Panc1 (cell line): ENCODE measurements at regions of chr11 and their contacts with region 1.

Region 1: DNA sequence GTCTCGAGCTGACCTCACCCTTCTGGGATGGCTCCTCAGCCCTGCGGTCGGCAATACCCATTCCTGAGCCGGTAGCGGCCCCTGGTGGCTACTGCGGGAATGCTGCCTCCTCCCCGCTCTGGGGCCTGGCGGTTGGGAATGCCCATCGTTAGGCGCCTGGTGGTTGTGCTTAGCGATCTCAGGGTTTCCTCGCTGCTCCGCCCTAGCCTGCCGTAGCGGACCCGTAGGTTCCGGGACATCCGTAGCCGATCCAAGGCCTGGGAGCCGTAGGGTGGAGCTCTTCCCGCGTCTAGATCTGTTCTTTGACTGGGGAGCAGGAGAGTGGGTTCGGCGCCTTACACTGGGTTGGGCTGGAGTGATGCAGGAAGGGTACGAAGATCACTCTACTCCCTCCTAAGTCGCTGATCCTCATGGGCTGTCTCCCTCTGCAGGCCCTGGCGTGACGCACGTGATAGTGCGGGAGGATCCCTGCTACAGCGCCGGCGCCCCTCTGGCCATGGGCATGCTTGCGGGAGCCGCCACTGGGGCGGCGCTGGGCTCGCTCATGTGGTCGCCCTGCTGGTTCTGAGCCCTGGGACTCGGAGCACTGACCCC is 14.8 kb downstream of the PLEKHB1 start:
- DNase-seq: peak; percentile 65
- ATAC-seq: peak; percentile 97
- H3K4me3 ChIP-seq: peak overlapping the region; percentile 7 to 36; a peak in 2 of 4 replicates
- H3K27ac ChIP-seq: peak overlapping the region; percentile 49; the same call in 1 of the 2 replicates
- H3K4me1 ChIP-seq: no peaks in the 10 kb centered on the region
- H3K27me3 ChIP-seq: no peaks in the 10 kb centered on the region
- CTCF ChIP-seq: peak; percentile 98

Region 2: DNA sequence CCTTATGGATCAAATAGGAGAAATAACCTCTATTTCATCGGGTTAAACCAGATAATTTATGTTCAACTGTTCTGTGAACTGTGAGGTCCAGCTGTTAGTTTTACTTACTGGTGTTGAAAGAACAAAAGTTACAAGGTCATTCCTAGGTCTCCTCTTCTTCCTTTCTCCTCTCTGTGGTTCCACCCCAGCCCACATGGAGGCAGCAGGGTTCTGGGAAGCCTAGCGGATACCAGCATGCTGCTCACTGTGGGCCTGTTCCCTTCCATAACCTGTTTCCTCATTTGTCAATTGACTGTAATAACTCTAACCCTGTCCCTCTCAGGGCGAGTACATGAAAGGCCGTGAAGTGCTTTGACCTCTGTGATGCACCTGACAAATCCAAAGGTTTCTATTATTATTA is 257.1 kb before region 1 on chr11:
- CTCF ChIA-PET with region 1: interaction called, 5 read pairs
- POLR2A ChIA-PET with region 1: no interaction called
- in situ Hi-C with region 1: no loop called
- intact Hi-C with region 1: loop called (anchors 5 kb)
- DNase-seq: no peak
- ATAC-seq: peak; percentile 72
- H3K4me3 ChIP-seq: no peak overlapping the region
- H3K27ac ChIP-seq: no peak overlapping the region
- H3K4me1 ChIP-seq: no peaks in the 10 kb centered on the region
- H3K27me3 ChIP-seq: no peaks in the 10 kb centered on the region
- CTCF ChIP-seq: peak; percentile 77

Region 3: GRCh38 chr11:73478738-73479347 is 182.3 kb before region 1 on chr11:
- CTCF ChIA-PET with region 1: interaction called, 17 read pairs
- POLR2A ChIA-PET with region 1: interaction called, 3 read pairs
- in situ Hi-C with region 1: no loop called
- intact Hi-C with region 1: loop called (anchors 5 kb)
- DNase-seq: peak; percentile 27
- ATAC-seq: peak; percentile 93
- H3K4me3 ChIP-seq: no peak overlapping the region
- H3K27ac ChIP-seq: no peak overlapping the region
- H3K4me1 ChIP-seq: no peaks in the 10 kb centered on the region
- H3K27me3 ChIP-seq: no peaks in the 10 kb centered on the region
- CTCF ChIP-seq: peak; percentile 94

Region 4: GRCh38 chr11:73530109-73530508 is 131.0 kb before region 1 on chr11:
- CTCF ChIA-PET with region 1: interaction called, 13 read pairs
- POLR2A ChIA-PET with region 1: no interaction called
- in situ Hi-C with region 1: no loop called
- intact Hi-C with region 1: no loop called
- DNase-seq: no peak
- ATAC-seq: peak; percentile 62; the same call in 1 of the 2 replicates
- H3K4me3 ChIP-seq: no peak overlapping the region
- H3K27ac ChIP-seq: no peak overlapping the region
- H3K4me1 ChIP-seq: peaks cover 10% of the 10 kb centered on the region
- H3K27me3 ChIP-seq: no peaks in the 10 kb centered on the region
- CTCF ChIP-seq: peak; percentile 73